Breast epithelium (tissue), 4 donors: ENCODE measurements at regions of chr6 and their contacts with region 1.

Region 1: DNA sequence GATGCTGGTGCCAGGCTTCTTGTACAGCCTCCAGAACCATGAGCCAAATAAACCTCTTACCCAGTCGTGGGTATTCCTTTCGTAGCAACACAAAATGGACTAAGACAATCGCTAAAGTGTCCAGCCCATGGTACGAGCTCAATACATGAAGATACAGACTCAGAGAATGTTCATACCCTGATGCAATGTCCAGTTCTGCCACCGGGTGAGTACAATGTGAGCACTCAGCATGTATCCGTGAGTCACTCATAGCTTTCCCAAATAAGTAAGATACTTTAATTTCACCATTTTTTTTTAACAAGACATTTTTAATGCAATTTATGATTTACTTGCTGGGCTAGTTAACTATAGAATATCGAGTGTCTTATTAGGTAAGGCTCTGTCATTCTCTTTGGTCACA is 26.7 kb upstream of the PDE10A start:
- DNase-seq: no peak
- H3K4me3 ChIP-seq: no peak overlapping the region
- H3K27ac ChIP-seq: no peak overlapping the region
- H3K4me1 ChIP-seq: no peaks in the 10 kb centered on the region
- H3K27me3 ChIP-seq: no peaks in the 10 kb centered on the region
- CTCF ChIP-seq: no peak
- POLR2A ChIP-seq: no peak

Region 2: DNA sequence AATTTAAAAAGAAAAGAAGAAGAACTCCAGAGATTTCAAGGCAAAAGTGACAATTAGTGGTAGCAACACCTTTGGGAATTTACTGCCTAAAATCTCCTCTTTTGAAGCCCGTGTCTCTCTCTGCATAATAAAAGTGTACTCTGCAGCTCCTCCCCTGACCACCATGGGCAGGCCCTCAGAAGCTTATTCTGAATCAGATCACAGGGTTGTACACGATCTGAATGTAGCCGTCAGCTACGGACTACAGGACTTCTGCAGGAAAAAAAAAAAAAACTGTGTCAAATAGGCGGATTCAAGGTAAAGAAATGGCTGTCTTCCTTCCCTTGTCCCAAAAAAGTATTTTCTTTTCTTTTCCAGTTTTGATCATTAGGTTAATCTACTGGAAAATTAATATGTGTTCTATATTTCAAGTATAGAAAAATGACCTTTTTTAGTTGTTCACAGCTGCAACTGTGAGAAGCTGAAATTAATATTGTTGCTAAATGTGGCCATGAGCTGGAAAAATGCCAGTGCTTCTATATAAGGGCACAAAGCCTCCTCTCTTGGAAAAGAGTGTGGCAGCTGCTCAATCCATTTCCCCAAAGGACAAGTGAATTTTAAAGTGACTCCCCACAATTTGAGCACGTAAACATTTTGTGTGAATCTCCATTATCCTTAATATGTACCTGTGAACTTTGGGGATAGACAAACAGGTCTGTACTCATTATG is 777.7 kb before region 1 on chr6:
- intact Hi-C with region 1: no loop called
- DNase-seq: no peak
- H3K4me3 ChIP-seq: no peak overlapping the region
- H3K27ac ChIP-seq: no peak overlapping the region
- H3K4me1 ChIP-seq: no peaks in the 10 kb centered on the region
- H3K27me3 ChIP-seq: no peaks in the 10 kb centered on the region
- CTCF ChIP-seq: no peak
- POLR2A ChIP-seq: no peak

Region 3: DNA sequence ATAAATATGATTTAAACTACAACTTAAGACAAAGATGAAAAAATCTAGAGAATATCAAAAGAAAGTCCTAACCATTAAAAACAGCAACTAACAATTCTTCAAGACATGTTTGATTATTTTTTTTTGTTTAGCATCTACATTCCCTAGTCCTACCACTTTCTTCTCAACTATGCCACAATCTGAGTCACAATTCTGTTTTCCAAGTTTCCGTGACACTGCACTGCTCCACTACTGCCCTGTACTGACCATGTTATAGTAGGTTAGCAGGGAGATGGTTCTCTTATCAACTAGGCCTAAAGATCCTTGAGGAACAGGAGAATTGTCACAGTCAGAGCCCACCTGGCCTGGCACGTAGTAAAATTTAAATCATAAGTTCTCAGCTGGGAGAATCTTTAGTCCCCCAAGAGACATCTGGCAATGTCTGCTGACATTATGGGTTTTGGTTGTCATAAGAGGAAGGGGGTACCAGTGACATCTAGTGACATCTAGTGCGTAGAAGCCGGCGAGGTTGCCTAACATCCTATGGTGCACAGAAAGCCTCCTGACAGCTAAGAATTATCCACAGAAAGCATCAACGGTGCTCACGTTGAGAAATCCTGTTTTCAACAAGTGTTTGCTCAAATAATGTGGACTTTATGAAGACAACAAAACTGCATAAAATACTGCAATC is 127.1 kb before region 1 on chr6:
- intact Hi-C with region 1: no loop called
- DNase-seq: no peak
- H3K4me3 ChIP-seq: no peak overlapping the region
- H3K27ac ChIP-seq: no peak overlapping the region
- H3K4me1 ChIP-seq: no peaks in the 10 kb centered on the region
- H3K27me3 ChIP-seq: no peaks in the 10 kb centered on the region
- CTCF ChIP-seq: no peak
- POLR2A ChIP-seq: no peak

Region 4: DNA sequence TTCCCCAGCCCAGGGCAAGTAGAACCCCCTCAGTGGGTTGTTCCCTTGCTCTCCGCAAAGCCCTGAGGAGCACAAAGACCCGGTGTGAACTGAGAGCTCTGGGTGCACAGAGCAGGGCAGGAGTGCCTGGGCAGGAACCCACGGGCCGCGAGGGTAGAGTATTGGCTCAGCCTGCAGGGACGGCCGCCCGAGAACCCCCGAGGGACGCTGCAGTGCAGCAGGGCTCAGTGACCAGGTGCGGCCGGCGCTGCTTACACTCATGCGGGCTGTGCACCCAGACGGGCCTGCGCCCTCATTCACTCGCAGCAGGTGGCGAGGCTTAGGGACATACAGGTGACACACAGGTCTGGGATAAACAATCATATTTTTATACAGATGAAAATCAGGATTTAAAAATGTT is 25.2 kb after region 1 on chr6:
- intact Hi-C with region 1: loop called (anchors 1 kb)
- DNase-seq: no peak
- H3K4me3 ChIP-seq: no peak overlapping the region
- H3K27ac ChIP-seq: no peak overlapping the region
- H3K4me1 ChIP-seq: no peaks in the 10 kb centered on the region
- H3K27me3 ChIP-seq: no peaks in the 10 kb centered on the region
- CTCF ChIP-seq: no peak
- POLR2A ChIP-seq: no peak

Region 5: GRCh38 chr6:166633732-166634535 is 944.2 kb after region 1 on chr6:
- intact Hi-C with region 1: no loop called
- DNase-seq: no peak
- H3K4me3 ChIP-seq: no peak overlapping the region
- H3K27ac ChIP-seq: no peak overlapping the region
- H3K4me1 ChIP-seq: no peaks in the 10 kb centered on the region
- H3K27me3 ChIP-seq: no peaks in the 10 kb centered on the region
- CTCF ChIP-seq: no peak
- POLR2A ChIP-seq: no peak

Region 6: DNA sequence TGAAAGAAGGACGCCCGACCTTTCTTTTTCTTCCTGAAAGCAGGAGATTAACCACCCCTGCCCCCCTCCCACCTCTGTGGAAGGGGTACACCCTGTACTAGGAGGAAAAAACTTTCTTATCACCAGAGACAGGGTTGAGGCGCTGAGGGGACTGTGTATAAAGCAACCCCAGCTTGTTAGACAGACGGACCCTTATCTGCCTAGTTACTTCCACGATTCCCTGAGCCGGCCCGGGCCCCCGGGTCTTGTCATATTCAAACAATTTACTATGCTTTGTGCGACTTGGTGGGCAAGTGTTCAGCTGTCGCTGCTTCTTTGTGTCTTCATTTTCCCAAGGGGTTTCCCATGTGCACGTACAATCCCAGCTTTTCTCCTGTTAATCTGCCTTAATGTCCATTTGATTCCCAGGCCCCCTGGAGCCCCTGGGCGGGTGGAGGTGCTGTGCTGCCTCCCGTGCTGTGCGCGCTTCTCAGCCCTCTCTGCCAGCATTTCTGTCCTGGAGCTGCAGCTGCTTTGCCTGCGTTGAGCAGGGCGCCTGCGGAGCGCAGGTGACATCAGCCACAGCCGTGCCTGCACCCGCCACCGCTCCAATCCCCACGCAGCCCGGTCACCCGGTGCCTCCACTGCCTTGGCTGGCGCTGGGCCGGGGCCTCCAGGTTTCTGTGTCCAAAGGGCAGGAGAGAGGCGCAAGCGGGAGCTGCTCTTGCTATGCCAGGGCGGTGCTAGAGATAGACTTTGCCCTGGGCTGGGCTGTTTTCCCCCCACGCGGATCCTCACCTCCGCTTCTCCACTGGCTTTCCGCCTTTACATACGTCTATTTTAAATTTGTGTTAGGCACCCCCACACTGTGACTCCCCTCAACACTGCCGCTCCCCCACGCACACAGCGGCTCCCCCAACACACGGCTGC is 1731.4 kb after region 1 on chr6:
- intact Hi-C with region 1: no loop called
- DNase-seq: no peak
- H3K4me3 ChIP-seq: no peak overlapping the region
- H3K27ac ChIP-seq: no peak overlapping the region
- H3K4me1 ChIP-seq: no peaks in the 10 kb centered on the region
- H3K27me3 ChIP-seq: peaks cover 0 to 3% of the 10 kb centered on the region in 2 donors
- CTCF ChIP-seq: no peak
- POLR2A ChIP-seq: no peak